Prostate gland (tissue), 2 donors: ENCODE measurements at regions of chr10 and their contacts with region 1.

Region 1: GRCh38 chr10:22003079-22003913 is at the start of gene DNAJC1:
- DNase-seq: peak; percentile 98
- H3K4me3 ChIP-seq: peak within 1 kb of the TSS; percentile 81 to 91
- H3K27ac ChIP-seq: peak within 1 kb of the TSS; percentile 95 to 96
- H3K4me1 ChIP-seq: no peaks in the 10 kb centered on the region
- H3K27me3 ChIP-seq: no peaks in the 10 kb centered on the region
- CTCF ChIP-seq: peak in 2 of 4 experiments; percentile 25 to 34
- POLR2A ChIP-seq: peak; percentile 98
- total RNA-seq, gene DNAJC1: 62.8 to 89.3 TPM

Region 2: GRCh38 chr10:22228943-22229801 is 225.9 kb after region 1 on chr10:
- intact Hi-C with region 1: loop called (anchors 5 kb)
- DNase-seq: peak; percentile 86
- H3K4me3 ChIP-seq: peak overlapping the region; percentile 68 to 71
- H3K27ac ChIP-seq: peak overlapping the region; percentile 91 to 97
- H3K4me1 ChIP-seq: no peaks in the 10 kb centered on the region
- H3K27me3 ChIP-seq: no peaks in the 10 kb centered on the region
- CTCF ChIP-seq: peak in 1 of 4 experiments; percentile 17
- POLR2A ChIP-seq: peak; percentile 21

Region 3: GRCh38 chr10:23067939-23068775 is 1064.9 kb after region 1 on chr10:
- intact Hi-C with region 1: loop called (anchors 10 kb)
- DNase-seq: peak; percentile 64
- H3K4me3 ChIP-seq: no peak overlapping the region
- H3K27ac ChIP-seq: no peak overlapping the region
- H3K4me1 ChIP-seq: no peaks in the 10 kb centered on the region
- H3K27me3 ChIP-seq: no peaks in the 10 kb centered on the region
- CTCF ChIP-seq: peak; percentile 44 to 73 (median 65)
- POLR2A ChIP-seq: no peak